Right lobe of liver (tissue), 6 donors: ENCODE measurements at regions of chr1 and their contacts with region 1.

Region 1: GRCh38 chr1:246506674-246507481 is at the start of gene SMYD3:
- DNase-seq: peak; percentile 80 to 86 (median 84)
- ATAC-seq: peak; percentile 97 to 99 (median 99)
- H3K4me3 ChIP-seq: peak within 1 kb of the TSS; percentile 75 to 91 (median 89)
- H3K27ac ChIP-seq: peak within 1 kb of the TSS in 1 of 3 donors; percentile 3
- H3K4me1 ChIP-seq: no peaks in the 10 kb centered on the region
- H3K27me3 ChIP-seq: no peaks in the 10 kb centered on the region
- CTCF ChIP-seq: peak in 2 of 4 donors; percentile 26 to 27
- POLR2A ChIP-seq: peak; percentile 26
- total RNA-seq, gene SMYD3: 6.3 to 10.0 (median 6.6) TPM

Region 2: GRCh38 chr1:246699095-246699735 is 192.3 kb after region 1 on chr1:
- intact Hi-C with region 1: loop called in 1 of 2 experiments (anchors 10 kb)
- DNase-seq: peak; percentile 82 to 85 (median 85)
- ATAC-seq: peak; percentile 77 to 83 (median 79)
- H3K4me3 ChIP-seq: peak overlapping the region in 1 of 3 donors; percentile 45
- H3K27ac ChIP-seq: peak overlapping the region in 2 of 3 donors; percentile 31 to 59
- H3K4me1 ChIP-seq: peaks cover 0 to 5% (median 0%) of the 10 kb centered on the region in 4 donors
- H3K27me3 ChIP-seq: no peaks in the 10 kb centered on the region
- CTCF ChIP-seq: peak; percentile 63 to 93 (median 90)
- POLR2A ChIP-seq: peak; percentile 26